ENCODE measurements at regions of chr5 and their contacts with region 1.

Region 1: GRCh38 chr5:126780165-126780827 is 3.4 kb downstream of the LMNB1 start:
- DNase-seq: peak; percentile 83

Region 2: GRCh38 chr5:126676195-126676624 is 104.1 kb before region 1 on chr5:
- in situ Hi-C with region 1: loop called (anchors 10 kb)
- DNase-seq: peak; percentile 75